Mammary epithelial cell (primary cell): ENCODE measurements at regions of chr19 and their contacts with region 1.

Region 1: DNA sequence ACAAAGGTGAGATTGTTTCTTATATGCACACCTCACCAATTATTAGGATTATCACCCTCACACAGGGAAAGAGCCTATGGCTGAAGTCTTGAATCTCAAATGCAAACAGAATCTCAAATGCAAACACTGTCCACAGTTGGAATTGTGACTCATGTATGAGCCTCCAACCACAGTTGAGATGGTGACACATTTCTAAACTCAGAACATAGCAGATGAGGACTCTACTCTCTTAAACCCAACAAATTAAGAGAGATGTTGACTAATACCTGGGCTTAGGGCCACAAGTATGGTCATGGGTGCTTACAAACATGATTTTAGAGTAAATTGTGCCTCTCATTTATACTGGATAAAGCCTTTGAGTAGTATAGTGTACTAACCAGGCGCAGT is 32.4 kb upstream of the ZNF254 start:
- DNase-seq: peak; percentile 93
- H3K4me3 ChIP-seq: no peak overlapping the region
- H3K27ac ChIP-seq: peak overlapping the region; percentile 79
- H3K4me1 ChIP-seq: peaks cover 31% of the 10 kb centered on the region
- H3K27me3 ChIP-seq: no peaks in the 10 kb centered on the region
- CTCF ChIP-seq: no peak

Region 2: DNA sequence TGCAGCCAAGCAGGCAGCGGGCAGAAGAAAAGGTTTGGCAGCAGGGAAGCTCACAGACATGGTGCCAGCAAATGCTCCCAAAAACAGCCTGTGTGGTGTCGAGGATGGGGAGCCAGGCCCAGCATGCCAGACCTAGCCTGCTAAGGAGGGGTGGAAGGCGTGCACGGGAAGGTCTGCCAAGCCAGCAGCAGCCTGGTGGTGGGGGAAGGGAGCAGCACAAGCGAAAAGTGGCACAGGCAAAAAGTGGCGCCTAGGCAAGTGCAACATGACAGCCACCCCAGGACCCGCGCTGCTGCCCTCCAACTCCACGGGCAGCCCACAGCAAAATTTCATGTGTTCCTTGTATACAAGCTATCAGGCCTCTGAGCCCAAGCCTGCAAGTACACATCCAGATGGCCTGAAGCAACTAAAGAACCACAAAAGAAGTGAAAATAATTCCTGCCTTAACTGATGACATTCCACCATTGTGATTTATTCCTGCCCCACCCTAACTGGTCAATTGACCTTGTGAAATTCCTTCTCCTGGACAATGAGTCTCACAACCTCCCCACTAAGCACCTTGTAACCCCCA is 505.3 kb before region 1 on chr19:
- CTCF ChIA-PET with region 1: no interaction called
- dilution Hi-C with region 1: no loop called
- in situ Hi-C with region 1: loop called (anchors 25 kb)
- intact Hi-C with region 1: loop called (anchors 10 kb)
- DNase-seq: peak; percentile 72
- H3K4me3 ChIP-seq: no peak overlapping the region
- H3K27ac ChIP-seq: peak overlapping the region; percentile 94
- H3K4me1 ChIP-seq: peaks cover 30% of the 10 kb centered on the region
- H3K27me3 ChIP-seq: no peaks in the 10 kb centered on the region
- CTCF ChIP-seq: no peak

Region 3: GRCh38 chr19:23774524-23774971 is 280.0 kb before region 1 on chr19:
- CTCF ChIA-PET with region 1: no interaction called
- dilution Hi-C with region 1: no loop called
- in situ Hi-C with region 1: no loop called
- intact Hi-C with region 1: loop called (anchors 10 kb)
- DNase-seq: peak; percentile 36
- H3K4me3 ChIP-seq: no peak overlapping the region
- H3K27ac ChIP-seq: no peak overlapping the region
- H3K4me1 ChIP-seq: no peaks in the 10 kb centered on the region
- H3K27me3 ChIP-seq: no peaks in the 10 kb centered on the region
- CTCF ChIP-seq: no peak

Region 4: DNA sequence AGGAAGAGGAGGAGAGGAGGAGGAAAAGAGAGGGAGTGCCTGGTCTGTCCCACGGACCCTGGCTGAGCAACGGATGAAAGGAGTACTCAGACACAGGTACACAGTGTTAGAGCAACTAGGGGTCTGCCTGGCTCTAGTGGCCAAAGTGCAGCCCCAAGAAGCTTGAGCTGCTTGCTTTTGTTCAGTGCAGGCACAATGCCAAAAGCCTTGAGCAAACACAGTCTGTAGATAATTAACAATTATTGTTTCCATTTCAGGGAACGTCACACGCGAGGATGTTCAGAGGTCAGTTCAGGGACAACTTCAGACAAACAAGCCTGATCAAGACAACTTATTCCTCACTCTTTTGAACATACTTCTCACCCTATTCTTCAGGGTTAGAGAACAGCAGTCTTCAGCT is 172.0 kb before region 1 on chr19:
- CTCF ChIA-PET with region 1: no interaction called
- dilution Hi-C with region 1: no loop called
- in situ Hi-C with region 1: no loop called
- intact Hi-C with region 1: no loop called
- DNase-seq: no peak
- H3K4me3 ChIP-seq: no peak overlapping the region
- H3K27ac ChIP-seq: no peak overlapping the region
- H3K4me1 ChIP-seq: no peaks in the 10 kb centered on the region
- H3K27me3 ChIP-seq: no peaks in the 10 kb centered on the region
- CTCF ChIP-seq: no peak

Region 5: GRCh38 chr19:24074720-24075454 is 20.3 kb after region 1 on chr19:
- CTCF ChIA-PET with region 1: no interaction called
- dilution Hi-C with region 1: no loop called
- in situ Hi-C with region 1: no loop called
- intact Hi-C with region 1: loop called (anchors 2 kb)
- DNase-seq: peak; percentile 57
- H3K4me3 ChIP-seq: no peak overlapping the region
- H3K27ac ChIP-seq: no peak overlapping the region
- H3K4me1 ChIP-seq: peaks cover 21% of the 10 kb centered on the region
- H3K27me3 ChIP-seq: no peaks in the 10 kb centered on the region
- CTCF ChIP-seq: no peak